ENCODE measurements at regions of chr4 and their contacts with region 1.

Region 1: DNA sequence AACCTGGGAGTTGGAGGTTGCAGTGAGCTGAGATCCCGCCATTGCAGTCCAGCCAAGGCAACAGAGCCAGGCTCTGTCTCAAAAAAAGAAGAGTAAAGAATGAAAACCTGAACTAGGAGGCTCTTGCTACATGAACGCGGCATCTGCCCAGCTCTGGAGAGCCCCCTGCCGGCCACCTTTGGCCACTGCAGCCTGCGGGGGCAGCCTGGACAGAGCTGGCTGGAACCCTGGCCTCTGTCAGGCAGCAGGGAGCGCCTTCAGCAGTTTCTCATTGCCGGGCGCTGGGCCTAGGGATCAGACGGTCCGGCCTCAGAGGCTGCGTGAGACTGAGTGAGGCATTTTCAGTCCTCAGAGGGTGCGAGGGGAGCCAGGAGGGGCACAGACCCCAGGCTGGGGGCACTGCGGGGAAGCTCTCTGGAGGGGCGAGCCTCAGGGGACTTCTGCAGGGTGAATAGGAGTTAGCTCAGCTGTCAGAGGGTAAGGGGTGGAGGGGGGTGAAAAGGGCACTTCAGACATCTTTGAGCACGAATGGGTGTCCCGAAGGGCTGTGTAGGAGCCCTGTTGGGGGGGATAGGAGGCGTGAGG is 17.5 kb downstream of the DOK7 start:
- DNase-seq: peak; percentile 92
- H3K4me3 ChIP-seq: peak overlapping the region in 1 of 2 experiments; percentile 57; a peak in 1 of 4 replicates
- H3K27ac ChIP-seq: no peak overlapping the region
- H3K4me1 ChIP-seq: peaks cover 0 to 19% of the 10 kb centered on the region in 2 experiments; a peak in 1 of 4 replicates
- H3K27me3 ChIP-seq: no peaks in the 10 kb centered on the region
- CTCF ChIP-seq: peak; percentile 97
- EP300 ChIP-seq: no peak
- RAD21 ChIP-seq: peak; percentile 79

Region 2: DNA sequence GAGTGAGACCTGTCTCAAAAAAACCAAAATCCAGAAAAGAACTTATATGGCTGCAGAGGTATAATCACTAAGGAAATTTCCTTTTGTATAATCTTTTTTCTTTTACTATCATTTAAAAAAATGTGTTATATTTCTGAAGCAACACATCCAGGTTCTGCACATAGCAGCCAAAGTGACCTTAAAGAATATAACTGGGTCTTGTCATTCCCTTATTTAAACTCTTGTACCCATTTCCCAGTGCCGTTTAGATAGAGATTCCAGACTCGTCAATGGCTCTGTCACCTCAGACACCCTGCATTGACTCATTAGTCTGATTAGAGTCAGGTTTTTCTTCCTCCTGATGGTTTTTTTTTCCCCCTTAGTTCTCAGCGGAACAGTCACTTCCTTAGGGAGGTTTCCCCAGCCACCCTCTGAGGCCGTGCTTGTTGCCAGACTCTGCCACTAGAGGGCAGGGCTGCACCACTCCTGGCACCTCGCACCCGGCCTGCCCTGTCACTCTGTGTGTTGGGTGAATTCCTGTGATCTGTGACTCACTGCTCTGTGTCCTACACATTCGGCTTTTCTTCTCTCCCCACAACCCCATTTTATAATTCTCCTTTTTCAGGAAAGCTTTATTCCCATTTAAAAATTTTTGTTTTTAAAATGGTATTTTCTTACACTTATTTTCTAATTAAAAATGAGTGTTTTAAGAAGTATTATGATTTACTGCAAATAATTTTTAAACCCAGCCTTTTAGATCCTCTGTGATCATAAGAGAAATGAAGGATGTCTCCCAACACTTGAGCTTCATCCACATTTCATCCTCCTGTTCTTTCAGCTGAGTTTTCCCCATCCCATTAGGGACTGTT is 374.1 kb before region 1 on chr4:
- CTCF ChIA-PET with region 1: interaction called, 34 read pairs
- POLR2A ChIA-PET with region 1: no interaction called
- DNase-seq: peak; percentile 88
- H3K4me3 ChIP-seq: peak overlapping the region in 1 of 2 experiments; percentile 38; a peak in 1 of 4 replicates
- H3K27ac ChIP-seq: peak overlapping the region in 1 of 2 experiments; percentile 55; a peak in 2 of 4 replicates
- H3K4me1 ChIP-seq: peaks cover 3 to 18% of the 10 kb centered on the region in 2 experiments; a peak in 3 of 4 replicates
- H3K27me3 ChIP-seq: no peaks in the 10 kb centered on the region
- CTCF ChIP-seq: peak; percentile 99
- EP300 ChIP-seq: no peak
- RAD21 ChIP-seq: peak; percentile 89

Region 3: DNA sequence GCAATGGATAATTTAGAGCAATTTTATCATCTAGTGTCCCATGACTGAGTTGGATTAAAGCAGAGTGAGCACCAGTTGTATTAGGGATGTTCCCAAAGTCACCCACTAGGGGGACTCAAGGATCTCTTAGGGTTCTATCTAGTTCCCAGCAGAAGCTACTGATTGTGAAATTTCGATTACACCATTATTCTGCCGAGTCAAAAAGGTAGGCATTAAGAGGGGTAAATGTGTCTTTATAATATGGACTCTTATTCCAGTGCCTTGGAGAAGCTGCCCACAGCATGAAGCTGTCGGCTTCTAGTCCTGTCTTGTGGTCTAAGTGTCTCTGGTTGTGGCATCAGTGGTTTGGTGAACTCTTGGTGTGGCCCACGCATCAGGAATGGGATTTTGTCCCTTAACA is 134.5 kb before region 1 on chr4:
- CTCF ChIA-PET with region 1: interaction called, 33 read pairs
- POLR2A ChIA-PET with region 1: no interaction called
- DNase-seq: peak; percentile 81
- H3K4me3 ChIP-seq: no peak overlapping the region; a peak in 1 of 4 replicates
- H3K27ac ChIP-seq: no peak overlapping the region
- H3K4me1 ChIP-seq: peaks cover 0 to 4% of the 10 kb centered on the region in 2 experiments; a peak in 3 of 4 replicates
- H3K27me3 ChIP-seq: no peaks in the 10 kb centered on the region
- CTCF ChIP-seq: peak; percentile 93
- EP300 ChIP-seq: no peak
- RAD21 ChIP-seq: peak; percentile 87

Region 4: DNA sequence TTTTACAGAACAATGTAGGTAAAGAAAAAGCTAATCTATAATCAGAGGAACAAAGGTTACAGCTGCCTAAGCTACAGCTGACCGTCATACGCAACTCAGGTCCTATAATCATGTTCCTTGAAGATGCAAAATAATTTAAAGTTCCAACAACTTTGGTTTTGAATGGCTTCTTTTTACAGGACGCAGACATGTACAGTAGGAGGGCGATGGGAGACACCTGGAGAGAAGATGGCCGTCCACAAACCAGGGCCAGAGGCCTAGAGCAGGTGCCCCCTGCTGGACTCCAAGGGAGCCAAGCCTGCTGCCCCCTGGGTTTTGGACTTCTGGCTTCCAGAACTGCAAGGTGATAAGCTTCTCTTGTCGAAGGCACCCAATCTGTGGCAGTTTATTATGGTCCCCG is 28.2 kb before region 1 on chr4:
- CTCF ChIA-PET with region 1: interaction called, 12 read pairs
- POLR2A ChIA-PET with region 1: no interaction called
- DNase-seq: no peak
- H3K4me3 ChIP-seq: no peak overlapping the region
- H3K27ac ChIP-seq: no peak overlapping the region
- H3K4me1 ChIP-seq: no peaks in the 10 kb centered on the region
- H3K27me3 ChIP-seq: no peaks in the 10 kb centered on the region
- CTCF ChIP-seq: peak; percentile 50
- EP300 ChIP-seq: no peak
- RAD21 ChIP-seq: peak; percentile 15; the same call in 1 of the 2 replicates

Region 5: GRCh38 chr4:3491681-3492405 is 11.2 kb after region 1 on chr4:
- CTCF ChIA-PET with region 1: interaction called, 30 read pairs
- POLR2A ChIA-PET with region 1: interaction called, 3 read pairs
- DNase-seq: peak; percentile 76
- H3K4me3 ChIP-seq: no peak overlapping the region; a peak in 1 of 4 replicates
- H3K27ac ChIP-seq: no peak overlapping the region; a peak in 1 of 4 replicates
- H3K4me1 ChIP-seq: peaks cover 0 to 23% of the 10 kb centered on the region in 2 experiments; a peak in 1 of 4 replicates
- H3K27me3 ChIP-seq: no peaks in the 10 kb centered on the region
- CTCF ChIP-seq: no peak
- EP300 ChIP-seq: no peak
- RAD21 ChIP-seq: no peak

Measured in SK-N-SH (cell line).